ENCODE measurements at regions of chr7 and their contacts with region 1.

Region 1: GRCh38 chr7:38222481-38223096 is 44.5 kb downstream of the STARD3NL start:
- DNase-seq: no peak
- H3K4me3 ChIP-seq: no peak overlapping the region
- CTCF ChIP-seq: peak; percentile 63

Region 2: DNA sequence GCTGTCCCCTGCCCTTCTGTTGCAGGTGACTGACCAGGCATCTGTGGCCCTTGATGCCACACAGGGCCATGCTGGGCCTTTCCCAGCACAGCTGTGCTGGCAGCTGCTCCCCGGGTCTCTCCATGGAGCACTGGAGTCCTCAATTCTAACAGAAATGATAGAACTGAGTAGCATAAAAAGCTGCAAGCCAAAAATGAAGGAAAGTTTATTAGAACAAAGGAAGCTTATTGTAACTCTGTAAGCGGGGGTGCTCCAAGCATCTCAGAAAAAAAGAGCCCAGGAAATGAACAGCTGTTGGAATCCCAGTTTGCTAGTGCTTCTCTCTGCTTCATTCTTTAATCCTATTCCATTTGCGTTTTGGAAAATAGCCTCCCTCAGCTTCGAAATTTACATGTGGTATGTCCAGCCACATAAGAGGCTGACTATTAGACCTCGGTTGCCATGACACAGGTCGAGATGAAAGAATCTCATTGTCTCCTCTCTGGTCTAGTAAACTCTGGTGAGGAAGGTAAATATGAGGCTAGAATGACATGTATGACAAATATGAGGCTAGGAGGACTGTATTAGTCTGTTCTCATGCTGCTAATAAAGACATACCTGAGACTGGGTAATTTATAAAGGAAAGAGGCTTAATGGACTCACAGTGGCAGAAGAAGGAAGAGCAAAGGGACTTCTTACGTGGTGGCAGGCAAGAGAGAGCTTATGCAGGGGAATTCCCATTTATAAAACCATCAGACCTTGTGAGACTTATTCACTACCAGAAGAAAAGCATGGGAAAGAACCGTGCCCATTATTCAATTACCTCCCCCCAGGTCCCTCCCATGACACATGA is 278.5 kb before region 1 on chr7:
- CTCF ChIA-PET with region 1: no interaction called
- POLR2A ChIA-PET with region 1: no interaction called
- DNase-seq: no peak
- H3K4me3 ChIP-seq: no peak overlapping the region
- CTCF ChIP-seq: no peak

Region 3: GRCh38 chr7:38195804-38196595 is 26.6 kb before region 1 on chr7:
- CTCF ChIA-PET with region 1: interaction called, 140 read pairs
- POLR2A ChIA-PET with region 1: no interaction called
- DNase-seq: no peak
- H3K4me3 ChIP-seq: no peak overlapping the region
- CTCF ChIP-seq: no peak

Region 4: DNA sequence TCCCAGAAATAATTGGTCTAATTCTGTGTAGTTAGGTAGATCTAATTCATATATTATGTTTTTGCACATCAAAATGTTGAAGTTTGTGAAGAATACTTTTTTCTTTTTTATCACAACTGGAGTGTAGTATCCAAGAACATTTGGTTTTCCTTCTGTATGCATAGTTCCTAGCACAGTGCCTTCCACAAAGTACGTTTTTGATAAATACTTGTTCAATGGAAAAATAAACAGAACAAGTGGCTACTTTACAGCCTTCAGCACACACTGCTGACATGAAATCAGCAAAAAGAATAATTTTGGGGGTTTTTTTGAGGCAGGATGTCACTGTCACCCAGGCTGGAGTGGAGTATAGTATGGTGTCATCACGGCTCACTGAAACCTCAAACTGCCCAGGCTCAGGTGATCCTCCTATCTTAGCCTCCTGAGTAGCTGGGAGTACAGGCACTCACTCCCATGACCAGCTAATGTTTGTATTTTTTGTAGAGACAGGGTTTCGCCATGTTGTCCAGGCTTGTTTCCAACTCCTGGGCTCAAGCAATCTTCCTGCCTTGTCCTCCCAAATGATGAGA is 22.9 kb after region 1 on chr7:
- CTCF ChIA-PET with region 1: no interaction called
- POLR2A ChIA-PET with region 1: no interaction called
- DNase-seq: no peak
- H3K4me3 ChIP-seq: no peak overlapping the region
- CTCF ChIP-seq: no peak

Region 5: DNA sequence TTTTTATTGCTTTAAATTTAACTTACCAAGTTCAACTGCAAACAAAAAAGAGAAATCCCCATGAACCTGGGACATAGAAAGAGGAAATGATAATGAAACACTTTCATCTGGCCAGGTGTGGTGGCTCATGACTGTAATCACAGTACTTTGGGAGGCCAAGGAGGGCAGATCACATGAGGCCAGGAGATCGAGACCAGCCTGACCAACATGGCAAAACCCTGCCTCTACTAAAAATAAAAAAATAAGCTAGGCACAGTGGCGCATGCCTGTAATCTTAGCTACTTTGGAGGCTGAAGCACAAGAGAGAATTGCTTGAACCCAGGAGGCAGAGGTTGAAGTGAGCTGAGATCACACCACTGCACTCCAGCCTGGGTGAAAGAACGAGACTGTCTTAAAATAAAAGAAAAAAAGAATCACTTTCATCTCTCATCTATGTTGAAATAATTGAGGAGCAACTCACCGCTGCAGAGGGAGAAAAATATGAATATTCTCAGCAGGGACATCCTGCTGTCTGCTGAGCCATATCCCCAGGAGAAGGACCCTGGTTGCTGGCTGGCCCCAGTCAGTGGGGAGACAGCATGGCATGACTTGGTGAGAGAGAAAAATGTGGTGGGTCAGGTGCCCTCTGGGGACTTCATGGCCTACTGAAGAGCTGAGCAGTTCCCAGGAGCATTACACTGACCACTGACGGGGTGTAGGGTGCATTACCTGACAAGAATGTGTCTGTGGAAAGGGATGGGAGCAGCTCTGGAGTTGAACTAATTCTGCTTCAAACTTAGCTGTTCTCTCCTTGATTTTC is 73.7 kb after region 1 on chr7:
- CTCF ChIA-PET with region 1: no interaction called
- POLR2A ChIA-PET with region 1: no interaction called
- DNase-seq: no peak
- H3K4me3 ChIP-seq: no peak overlapping the region
- CTCF ChIP-seq: no peak

Measured in AG04449 (cell line).